GM12878 (cell line): ENCODE measurements at regions of chr3 and their contacts with region 1.

Region 1: GRCh38 chr3:63911873-63912767 is at the start of gene SCAANT1:
- DNase-seq: no peak
- ATAC-seq: peak; percentile 89
- H3K4me3 ChIP-seq: peak within 1 kb of the TSS; percentile 74
- H3K27ac ChIP-seq: peak within 1 kb of the TSS; percentile 86
- H3K4me1 ChIP-seq: peaks cover 20% of the 10 kb centered on the region
- H3K27me3 ChIP-seq: no peaks in the 10 kb centered on the region
- CTCF ChIP-seq: peak in 1 of 3 experiments; percentile 2; a peak in 1 of 6 replicates
- EP300 ChIP-seq: no peak
- POLR2A ChIP-seq: peak; percentile 84
- RAD21 ChIP-seq: no peak
- polyA plus RNA-seq, gene SCAANT1: 0.60 TPM in 1 of 2 experiments, not detected in the other

Region 2: DNA sequence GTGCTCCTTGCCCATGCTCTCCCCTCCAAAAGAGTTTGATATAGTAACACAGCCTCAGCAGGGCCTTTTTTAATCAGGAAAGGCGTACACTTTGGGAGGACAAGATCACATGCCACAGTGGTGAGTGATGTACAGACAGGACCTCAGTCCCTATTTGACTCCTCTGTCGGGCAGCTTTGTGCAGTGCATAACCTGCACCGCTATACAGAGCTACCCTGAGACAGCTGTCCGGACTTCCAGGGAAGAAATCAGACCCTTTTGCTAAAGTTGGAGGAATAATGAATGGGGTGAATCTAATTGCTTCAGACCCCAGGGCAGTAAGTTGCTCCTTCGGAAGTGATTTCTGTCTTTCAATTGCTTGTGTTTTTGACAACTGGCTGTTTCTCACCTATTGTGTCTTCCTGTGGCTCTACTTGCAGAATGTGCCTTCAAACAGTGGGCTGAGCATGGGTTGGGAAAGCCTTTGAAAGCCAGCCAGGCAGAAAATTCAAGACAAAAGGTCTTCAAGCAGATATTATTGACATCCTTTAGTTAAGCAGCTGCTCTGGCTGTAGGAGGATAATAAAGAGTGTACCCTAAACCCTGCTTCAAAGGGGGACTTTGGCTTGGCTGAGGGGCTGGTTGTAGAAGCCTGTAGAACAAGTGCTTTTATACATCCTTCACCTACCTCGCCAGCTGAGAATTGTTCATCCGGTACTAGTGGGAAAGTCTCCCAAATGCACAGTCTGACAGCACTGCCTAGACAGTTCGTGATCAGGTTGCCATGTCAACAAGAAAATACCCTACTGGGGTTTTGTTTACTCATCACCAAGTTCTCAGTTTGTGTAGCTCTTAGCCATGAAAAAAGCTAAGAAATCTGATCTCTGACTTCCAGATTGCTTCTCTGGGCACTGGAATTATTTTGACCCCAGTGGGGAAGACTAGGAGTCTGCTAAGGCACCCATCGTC is 224.6 kb before region 1 on chr3:
- CTCF ChIA-PET with region 1: no interaction called
- POLR2A ChIA-PET with region 1: no interaction called
- RAD21 ChIA-PET with region 1: no interaction called
- SMC1A ChIA-PET with region 1: no interaction called
- in situ Hi-C with region 1: no loop called
- intact Hi-C with region 1: no loop called
- DNase-seq: no peak
- ATAC-seq: peak; percentile 55
- H3K4me3 ChIP-seq: no peak overlapping the region
- H3K27ac ChIP-seq: no peak overlapping the region
- H3K4me1 ChIP-seq: no peaks in the 10 kb centered on the region
- H3K27me3 ChIP-seq: no peaks in the 10 kb centered on the region
- CTCF ChIP-seq: no peak
- EP300 ChIP-seq: no peak
- POLR2A ChIP-seq: no peak
- RAD21 ChIP-seq: no peak

Region 3: DNA sequence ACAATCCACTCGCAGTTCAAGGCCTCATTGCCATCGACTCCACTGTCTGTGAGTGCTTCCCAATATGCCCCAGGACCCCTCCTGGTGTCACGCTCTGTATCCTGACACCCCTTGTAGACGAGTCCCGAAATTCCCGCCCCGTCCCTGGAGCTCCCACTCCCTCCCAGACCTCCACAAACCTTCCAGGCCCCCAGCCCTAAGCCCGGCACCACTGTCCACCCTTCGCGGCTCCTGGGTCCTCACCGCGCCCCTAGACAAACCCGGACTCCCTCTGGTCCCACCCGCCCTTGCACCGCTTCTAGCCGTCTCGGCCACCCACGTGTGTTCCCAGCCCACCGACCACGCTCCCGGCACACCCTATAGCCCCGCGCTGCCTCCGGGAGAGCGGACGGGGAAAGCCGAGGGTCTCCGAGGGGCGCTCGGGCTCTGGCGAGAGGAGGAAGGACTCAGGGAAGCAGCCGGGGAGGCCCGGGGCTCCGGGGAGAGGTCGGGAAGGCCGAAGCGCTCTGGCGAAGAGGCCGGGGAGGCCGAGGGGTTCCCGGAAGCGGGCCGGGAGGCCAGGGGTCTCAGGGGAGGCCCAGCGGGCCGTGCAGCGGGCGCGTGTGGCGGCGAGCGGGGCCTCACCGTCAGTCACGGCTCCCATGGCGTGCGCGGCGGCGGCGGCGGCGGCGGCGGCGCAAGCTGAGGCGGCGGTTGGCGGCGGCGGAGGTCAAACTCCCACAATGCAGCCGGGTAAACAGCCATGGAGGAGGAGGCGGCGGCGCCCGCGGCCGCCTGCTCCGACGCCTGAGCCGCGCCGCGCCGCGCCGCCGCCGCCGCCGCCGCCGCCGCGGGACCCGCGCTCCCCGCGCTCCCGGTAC is 48.7 kb before region 1 on chr3 and contains the starts of genes ATXN7 and THOC7:
- CTCF ChIA-PET with region 1: interaction called, 4 read pairs
- POLR2A ChIA-PET with region 1: no interaction called
- RAD21 ChIA-PET with region 1: interaction called, 5 read pairs
- SMC1A ChIA-PET with region 1: interaction called, 5 read pairs
- in situ Hi-C with region 1: no loop called
- intact Hi-C with region 1: loop called (anchors 2 kb)
- DNase-seq: no peak
- ATAC-seq: peak; percentile 78
- H3K4me3 ChIP-seq: peak within 1 kb of the TSS; percentile 100
- H3K27ac ChIP-seq: peak within 1 kb of the TSS; percentile 94
- H3K4me1 ChIP-seq: peaks cover 7% of the 10 kb centered on the region; the same call in 1 of the 2 replicates
- H3K27me3 ChIP-seq: no peaks in the 10 kb centered on the region
- CTCF ChIP-seq: no peak
- EP300 ChIP-seq: no peak
- POLR2A ChIP-seq: peak; percentile 81
- RAD21 ChIP-seq: no peak
- polyA plus RNA-seq, gene ATXN7: 1.5 to 3.2 TPM
- polyA plus RNA-seq, gene THOC7: 227 to 269 TPM

Region 4: GRCh38 chr3:63877737-63878393 is 34.3 kb before region 1 on chr3:
- CTCF ChIA-PET with region 1: interaction called, 5 read pairs
- POLR2A ChIA-PET with region 1: no interaction called
- RAD21 ChIA-PET with region 1: no interaction called
- SMC1A ChIA-PET with region 1: interaction called, 10 read pairs
- in situ Hi-C with region 1: no loop called
- intact Hi-C with region 1: no loop called
- DNase-seq: no peak
- ATAC-seq: no peak
- H3K4me3 ChIP-seq: no peak overlapping the region
- H3K27ac ChIP-seq: no peak overlapping the region
- H3K4me1 ChIP-seq: no peaks in the 10 kb centered on the region
- H3K27me3 ChIP-seq: no peaks in the 10 kb centered on the region
- CTCF ChIP-seq: no peak
- EP300 ChIP-seq: no peak
- POLR2A ChIP-seq: no peak
- RAD21 ChIP-seq: no peak

Region 5: DNA sequence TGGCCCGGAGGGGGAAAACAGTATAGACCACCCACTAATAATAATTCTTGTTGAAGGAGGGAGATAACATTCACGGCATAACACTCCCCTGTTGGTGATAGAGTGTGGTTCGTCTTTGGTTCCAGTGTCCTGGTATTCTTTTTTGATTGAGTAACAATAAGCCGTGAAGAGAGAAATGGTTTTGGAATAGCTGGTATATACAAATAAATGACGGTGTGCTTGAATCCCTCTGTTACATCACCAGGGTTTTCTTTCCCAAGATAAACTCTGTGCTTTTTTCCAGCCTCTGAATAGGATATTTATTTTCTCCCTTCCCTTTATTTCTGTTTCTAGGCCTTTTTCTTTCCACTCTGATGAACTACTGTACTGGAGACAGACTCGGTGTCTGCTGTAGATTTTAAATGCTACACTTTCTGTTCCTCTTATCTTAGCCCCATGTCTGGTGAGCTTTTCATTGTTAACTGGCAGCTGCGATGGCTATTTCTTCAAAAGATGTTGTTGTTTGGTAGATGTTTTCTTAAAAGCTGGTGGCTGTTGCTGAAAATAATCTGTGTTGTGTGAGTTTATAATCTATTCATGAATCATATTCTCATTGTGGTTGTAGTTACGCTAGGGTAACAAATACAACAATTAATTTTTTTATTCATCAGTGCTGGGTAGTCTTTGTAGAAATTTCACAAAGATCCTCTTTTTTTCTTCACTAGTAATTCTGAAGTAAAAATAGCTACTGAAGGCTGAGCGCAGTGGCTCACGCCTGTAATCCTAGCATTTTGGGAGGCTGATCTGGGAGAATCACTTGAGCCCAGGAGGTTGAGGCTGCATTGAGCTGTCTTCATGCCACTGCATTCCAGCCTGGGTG is 15.5 kb after region 1 on chr3:
- CTCF ChIA-PET with region 1: interaction called, 6 read pairs
- POLR2A ChIA-PET with region 1: interaction called, 5 read pairs
- RAD21 ChIA-PET with region 1: interaction called, 3 read pairs
- SMC1A ChIA-PET with region 1: interaction called, 10 read pairs
- in situ Hi-C with region 1: no loop called
- intact Hi-C with region 1: no loop called
- DNase-seq: no peak
- ATAC-seq: peak; percentile 86
- H3K4me3 ChIP-seq: no peak overlapping the region
- H3K27ac ChIP-seq: no peak overlapping the region; the same call in 1 of the 2 replicates
- H3K4me1 ChIP-seq: peaks cover 26% of the 10 kb centered on the region
- H3K27me3 ChIP-seq: no peaks in the 10 kb centered on the region
- CTCF ChIP-seq: no peak
- EP300 ChIP-seq: peak; percentile 39 to 47; a peak in 1 of 4 replicates
- POLR2A ChIP-seq: no peak
- RAD21 ChIP-seq: no peak

Region 6: GRCh38 chr3:64815195-64815631 is 903.1 kb after region 1 on chr3:
- CTCF ChIA-PET with region 1: no interaction called
- POLR2A ChIA-PET with region 1: no interaction called
- RAD21 ChIA-PET with region 1: no interaction called
- SMC1A ChIA-PET with region 1: no interaction called
- in situ Hi-C with region 1: no loop called
- intact Hi-C with region 1: no loop called
- DNase-seq: no peak
- ATAC-seq: peak; percentile 44
- H3K4me3 ChIP-seq: no peak overlapping the region
- H3K27ac ChIP-seq: no peak overlapping the region
- H3K4me1 ChIP-seq: no peaks in the 10 kb centered on the region
- H3K27me3 ChIP-seq: no peaks in the 10 kb centered on the region
- CTCF ChIP-seq: no peak
- EP300 ChIP-seq: no peak
- POLR2A ChIP-seq: no peak
- RAD21 ChIP-seq: no peak